ENCODE measurements at regions of chr12 and their contacts with region 1.

Region 1: DNA sequence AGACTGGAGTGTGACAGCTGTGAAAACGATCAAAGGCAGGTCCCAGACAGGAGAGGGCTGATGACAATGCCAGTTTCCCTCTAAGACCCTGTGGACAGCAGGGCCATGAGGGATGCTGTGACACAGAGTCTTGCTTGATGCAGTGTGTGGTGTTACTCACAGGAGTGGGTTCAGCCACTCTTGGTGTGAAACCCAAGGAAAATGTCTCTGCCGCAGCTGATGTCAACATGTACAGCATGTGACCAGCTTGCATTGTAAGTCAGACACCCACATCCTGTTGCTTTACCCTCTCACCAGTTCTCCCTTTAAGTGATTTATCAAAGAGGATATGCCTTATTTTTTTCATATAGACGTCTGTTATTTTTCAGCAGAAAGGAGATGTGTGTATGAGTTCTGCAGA is 268.6 kb downstream of the BTG1 start:
- DNase-seq: peak; percentile 83 to 97
- ATAC-seq: peak; percentile 81 to 94 (median 86)
- H3K4me3 ChIP-seq: no peak overlapping the region
- H3K4me3 Mint-ChIP-seq: peak overlapping the region; percentile 83
- H3K27ac ChIP-seq: peak overlapping the region; percentile 98
- H3K27ac Mint-ChIP-seq: peak overlapping the region; percentile 86 to 100
- H3K4me1 ChIP-seq: peaks cover 34% of the 10 kb centered on the region
- H3K4me1 Mint-ChIP-seq: peaks cover 72% of the 10 kb centered on the region in 2 donors
- H3K27me3 ChIP-seq: no peaks in the 10 kb centered on the region
- H3K27me3 Mint-ChIP-seq: no peaks in the 10 kb centered on the region
- CTCF ChIP-seq: no peak

Region 2: GRCh38 chr12:91507754-91508153 is 369.3 kb before region 1 on chr12:
- intact Hi-C with region 1: no loop called
- DNase-seq: no peak
- ATAC-seq: no peak
- H3K4me3 ChIP-seq: no peak overlapping the region
- H3K4me3 Mint-ChIP-seq: no peak overlapping the region
- H3K27ac ChIP-seq: no peak overlapping the region
- H3K27ac Mint-ChIP-seq: no peak overlapping the region
- H3K4me1 ChIP-seq: no peaks in the 10 kb centered on the region
- H3K4me1 Mint-ChIP-seq: no peaks in the 10 kb centered on the region
- H3K27me3 ChIP-seq: no peaks in the 10 kb centered on the region
- H3K27me3 Mint-ChIP-seq: peaks cover 18 to 34% of the 10 kb centered on the region in 2 donors
- CTCF ChIP-seq: no peak

Region 3: DNA sequence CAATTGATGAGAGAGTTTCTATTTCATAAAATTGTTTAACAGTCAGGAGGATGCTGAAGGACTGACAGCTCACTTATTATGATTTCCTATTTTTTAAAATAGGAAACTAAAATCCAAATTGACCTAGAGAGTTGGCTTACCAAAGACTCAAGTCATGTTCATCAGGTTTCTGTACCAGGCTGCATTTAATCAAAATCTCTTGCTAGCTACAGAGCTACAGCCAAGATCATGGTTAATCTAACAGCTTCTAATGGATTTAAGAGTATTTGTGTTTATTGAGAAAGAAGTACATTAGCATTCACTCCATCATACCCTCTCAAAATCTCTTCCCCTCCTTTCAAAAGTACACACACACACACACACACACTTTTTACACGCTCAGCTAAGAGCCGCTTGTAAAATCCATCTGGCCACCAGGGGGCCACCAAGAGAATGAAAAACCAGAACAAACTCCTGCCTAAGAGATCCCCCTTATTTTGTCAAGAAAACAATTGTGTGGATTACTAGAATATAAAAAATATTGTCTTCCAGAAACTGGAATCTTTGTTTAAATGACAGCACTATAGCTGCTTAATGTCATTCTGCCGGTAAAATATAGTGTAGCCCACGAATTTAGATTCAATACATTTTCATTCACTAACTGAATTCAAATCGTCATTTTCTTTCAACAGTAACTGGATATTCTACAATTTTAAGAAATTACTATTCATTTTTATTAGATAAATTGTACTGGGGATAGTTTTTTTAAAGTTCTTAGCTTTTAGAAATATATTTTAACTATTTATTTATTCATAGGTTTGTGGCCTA is 65.3 kb before region 1 on chr12:
- intact Hi-C with region 1: loop called (anchors 2 kb)
- DNase-seq: peak; percentile 67 to 87
- ATAC-seq: peak; percentile 81 to 88 (median 87)
- H3K4me3 ChIP-seq: no peak overlapping the region
- H3K4me3 Mint-ChIP-seq: no peak overlapping the region
- H3K27ac ChIP-seq: no peak overlapping the region
- H3K27ac Mint-ChIP-seq: peak overlapping the region; percentile 76 to 78
- H3K4me1 ChIP-seq: no peaks in the 10 kb centered on the region
- H3K4me1 Mint-ChIP-seq: peaks cover 6 to 10% of the 10 kb centered on the region in 2 donors
- H3K27me3 ChIP-seq: no peaks in the 10 kb centered on the region
- H3K27me3 Mint-ChIP-seq: no peaks in the 10 kb centered on the region
- CTCF ChIP-seq: peak; percentile 95

Region 4: DNA sequence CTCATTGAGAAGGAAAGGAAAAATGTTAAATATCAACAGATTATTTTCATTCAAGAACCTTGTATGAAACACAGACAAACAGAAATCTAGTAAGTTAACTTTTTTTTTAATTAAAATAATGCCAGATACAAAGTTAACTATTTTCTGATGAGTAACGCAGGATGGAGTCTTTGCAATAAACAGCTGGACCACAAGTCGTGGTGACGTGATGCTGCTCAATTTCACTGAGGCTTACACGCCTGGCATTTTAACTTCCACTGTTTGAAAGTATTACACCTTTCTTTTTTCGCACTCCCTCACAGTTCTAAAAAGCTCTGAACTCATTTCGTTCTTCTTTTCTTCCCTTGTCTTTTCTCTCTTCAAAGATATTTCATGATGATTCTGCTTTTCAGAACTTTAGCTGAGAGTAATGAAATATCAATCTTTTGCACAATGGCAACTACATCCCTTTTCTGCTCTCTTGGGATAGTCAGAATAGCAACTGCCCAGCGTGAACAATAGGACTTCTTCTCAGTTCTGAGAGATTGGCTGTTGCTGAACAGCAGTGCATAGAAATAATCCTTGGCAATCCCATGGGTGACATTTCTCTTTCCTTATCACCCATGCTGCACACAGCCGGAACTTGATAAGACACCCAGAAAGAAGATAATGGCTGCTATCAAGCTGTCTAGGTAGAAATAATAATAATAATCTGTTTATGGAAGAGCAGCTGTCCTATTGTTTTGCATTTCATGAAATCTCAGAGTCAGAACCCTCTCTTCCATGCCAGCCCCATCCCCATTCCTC is 108.2 kb after region 1 on chr12:
- intact Hi-C with region 1: loop called (anchors 5 kb)
- DNase-seq: peak; percentile 17 to 19
- ATAC-seq: peak; percentile 74 to 80 (median 75)
- H3K4me3 ChIP-seq: no peak overlapping the region
- H3K4me3 Mint-ChIP-seq: no peak overlapping the region
- H3K27ac ChIP-seq: no peak overlapping the region
- H3K27ac Mint-ChIP-seq: peak overlapping the region; percentile 56 to 59
- H3K4me1 ChIP-seq: peaks cover 3% of the 10 kb centered on the region
- H3K4me1 Mint-ChIP-seq: peaks cover 29 to 44% of the 10 kb centered on the region in 2 donors
- H3K27me3 ChIP-seq: no peaks in the 10 kb centered on the region
- H3K27me3 Mint-ChIP-seq: no peaks in the 10 kb centered on the region
- CTCF ChIP-seq: no peak

Region 5: DNA sequence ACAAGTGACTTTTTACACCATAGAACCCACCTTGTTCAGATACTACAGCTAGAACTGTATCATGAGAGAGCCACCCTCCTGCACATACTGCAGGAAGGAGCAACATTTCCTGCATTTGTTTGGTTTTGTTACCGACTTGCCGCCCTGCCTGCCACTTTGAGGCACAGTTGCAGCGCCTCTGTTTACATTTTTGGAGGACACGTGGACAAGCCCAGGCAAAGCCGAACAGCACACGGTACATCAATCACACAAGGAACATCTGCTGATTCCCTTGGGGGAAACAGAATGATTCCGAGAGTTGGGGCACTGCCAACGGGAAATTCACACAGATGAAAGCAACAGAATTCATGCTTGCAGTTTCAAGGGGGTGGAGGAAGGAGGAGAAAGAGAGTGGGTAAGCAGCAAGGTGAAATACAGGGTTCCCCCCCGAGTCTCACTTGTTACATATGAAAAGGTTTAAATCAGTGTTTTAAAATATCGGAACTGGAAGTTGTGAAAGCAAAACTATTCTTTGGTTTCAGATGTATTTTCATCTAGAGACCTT is 157.9 kb after region 1 on chr12:
- intact Hi-C with region 1: loop called (anchors 2 kb)
- DNase-seq: peak; percentile 26 to 79
- ATAC-seq: peak; percentile 56 to 69 (median 58)
- H3K4me3 ChIP-seq: peak overlapping the region; percentile 17
- H3K4me3 Mint-ChIP-seq: peak overlapping the region; percentile 96
- H3K27ac ChIP-seq: peak overlapping the region; percentile 71
- H3K27ac Mint-ChIP-seq: peak overlapping the region; percentile 97 to 98
- H3K4me1 ChIP-seq: peaks cover 36% of the 10 kb centered on the region
- H3K4me1 Mint-ChIP-seq: peaks cover 57 to 72% of the 10 kb centered on the region in 2 donors
- H3K27me3 ChIP-seq: no peaks in the 10 kb centered on the region
- H3K27me3 Mint-ChIP-seq: no peaks in the 10 kb centered on the region
- CTCF ChIP-seq: no peak

Region 6: GRCh38 chr12:92145731-92146496 is 268.9 kb after region 1 on chr12 and contains the start of gene BTG1:
- intact Hi-C with region 1: loop called (anchors 1 kb)
- DNase-seq: peak; percentile 97 to 100
- ATAC-seq: peak; percentile 73 to 87 (median 77)
- H3K4me3 ChIP-seq: peak within 1 kb of the TSS; percentile 96
- H3K4me3 Mint-ChIP-seq: peak within 1 kb of the TSS; percentile 88
- H3K27ac ChIP-seq: peak within 1 kb of the TSS; percentile 94
- H3K27ac Mint-ChIP-seq: peak within 1 kb of the TSS; percentile 98 to 99
- H3K4me1 ChIP-seq: no peaks in the 10 kb centered on the region
- H3K4me1 Mint-ChIP-seq: peaks cover 31 to 43% of the 10 kb centered on the region in 2 donors
- H3K27me3 ChIP-seq: no peaks in the 10 kb centered on the region
- H3K27me3 Mint-ChIP-seq: no peaks in the 10 kb centered on the region
- CTCF ChIP-seq: no peak
- total RNA-seq, gene BTG1: 801 to 1,037 (median 830) TPM

Region 7: GRCh38 chr12:92408072-92408900 is 531.3 kb after region 1 on chr12:
- intact Hi-C with region 1: loop called (anchors 5 kb)
- DNase-seq: peak; percentile 30 to 75
- ATAC-seq: peak; percentile 51 to 65 (median 51)
- H3K4me3 ChIP-seq: no peak overlapping the region
- H3K4me3 Mint-ChIP-seq: no peak overlapping the region
- H3K27ac ChIP-seq: peak overlapping the region; percentile 3
- H3K27ac Mint-ChIP-seq: peak overlapping the region in 1 of 2 donors; percentile 54
- H3K4me1 ChIP-seq: peaks cover 27% of the 10 kb centered on the region
- H3K4me1 Mint-ChIP-seq: peaks cover 44 to 45% of the 10 kb centered on the region in 2 donors
- H3K27me3 ChIP-seq: no peaks in the 10 kb centered on the region
- H3K27me3 Mint-ChIP-seq: no peaks in the 10 kb centered on the region
- CTCF ChIP-seq: peak; percentile 66

Region 8: GRCh38 chr12:92928962-92929915 is 1052.2 kb after region 1 on chr12 and contains the start of gene EEA1:
- intact Hi-C with region 1: loop called (anchors 1 kb)
- DNase-seq: peak; percentile 94 to 97
- ATAC-seq: peak; percentile 81 to 95 (median 85)
- H3K4me3 ChIP-seq: peak within 1 kb of the TSS; percentile 86
- H3K4me3 Mint-ChIP-seq: peak within 1 kb of the TSS; percentile 92
- H3K27ac ChIP-seq: peak within 1 kb of the TSS; percentile 98
- H3K27ac Mint-ChIP-seq: peak within 1 kb of the TSS; percentile 90
- H3K4me1 ChIP-seq: peaks cover 16% of the 10 kb centered on the region
- H3K4me1 Mint-ChIP-seq: peaks cover 31 to 33% of the 10 kb centered on the region in 2 donors
- H3K27me3 ChIP-seq: no peaks in the 10 kb centered on the region
- H3K27me3 Mint-ChIP-seq: no peaks in the 10 kb centered on the region
- CTCF ChIP-seq: no peak
- total RNA-seq, gene EEA1: 15.0 to 20.0 (median 15.0) TPM

Measured in natural killer cell (primary cell).